A549 (cell line): ENCODE measurements at regions of chr1 and their contacts with region 1.

Region 1: DNA sequence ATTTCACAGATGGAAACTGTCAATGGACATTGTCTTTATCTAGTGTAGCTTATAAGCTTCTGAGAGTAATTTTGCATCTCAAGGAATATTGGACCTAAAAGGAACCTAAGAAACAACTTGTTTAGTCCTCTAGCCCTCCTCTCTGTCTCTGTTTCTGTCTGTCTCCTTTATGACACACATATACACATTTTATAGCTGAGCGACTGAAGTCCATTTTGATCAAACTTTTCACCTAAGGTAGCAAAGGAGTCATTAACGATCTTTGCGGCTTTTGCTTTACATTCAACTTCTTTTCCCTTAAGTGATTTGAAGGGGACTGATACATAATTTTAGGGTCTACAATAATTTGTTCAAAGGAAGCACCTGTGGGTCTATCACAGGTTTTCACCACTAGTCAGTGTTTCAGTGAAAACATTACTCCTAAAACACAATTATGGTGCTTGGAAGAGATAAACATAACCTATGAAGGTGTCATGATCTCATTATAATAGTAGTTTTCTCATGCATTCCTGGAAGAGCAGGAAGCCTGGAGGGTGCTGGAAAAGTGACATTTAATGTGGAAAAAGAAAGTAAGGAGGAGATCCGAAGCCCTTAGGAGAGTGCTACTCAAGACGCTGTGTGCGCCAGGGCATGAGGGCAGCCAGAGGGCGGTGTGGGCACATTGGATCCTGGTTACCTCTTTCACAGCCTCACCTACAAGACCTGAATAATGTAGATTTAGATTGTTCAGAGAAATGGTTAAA is 248.6 kb downstream of the DNM3 start:
- DNase-seq: peak; percentile 23 to 82
- ATAC-seq: peak; percentile 94 to 99
- H3K4me3 ChIP-seq: no peak overlapping the region
- H3K27ac ChIP-seq: peak overlapping the region in 1 of 2 experiments; percentile 34; a peak in 3 of 6 replicates
- H3K4me1 ChIP-seq: no peaks in the 10 kb centered on the region
- CTCF ChIP-seq: peak; percentile 79
- EP300 ChIP-seq: no peak
- POLR2A ChIP-seq: no peak
- RAD21 ChIP-seq: peak; percentile 93 to 95

Region 2: GRCh38 chr1:171877701-171878100 is 212.2 kb before region 1 on chr1:
- CTCF ChIA-PET with region 1: no interaction called
- POLR2A ChIA-PET with region 1: no interaction called
- DNase-seq: no peak
- ATAC-seq: no peak
- H3K4me3 ChIP-seq: no peak overlapping the region
- H3K27ac ChIP-seq: no peak overlapping the region
- H3K4me1 ChIP-seq: peaks cover 3% of the 10 kb centered on the region; the same call in 1 of the 3 replicates
- CTCF ChIP-seq: no peak
- EP300 ChIP-seq: no peak
- POLR2A ChIP-seq: no peak
- RAD21 ChIP-seq: no peak

Region 3: DNA sequence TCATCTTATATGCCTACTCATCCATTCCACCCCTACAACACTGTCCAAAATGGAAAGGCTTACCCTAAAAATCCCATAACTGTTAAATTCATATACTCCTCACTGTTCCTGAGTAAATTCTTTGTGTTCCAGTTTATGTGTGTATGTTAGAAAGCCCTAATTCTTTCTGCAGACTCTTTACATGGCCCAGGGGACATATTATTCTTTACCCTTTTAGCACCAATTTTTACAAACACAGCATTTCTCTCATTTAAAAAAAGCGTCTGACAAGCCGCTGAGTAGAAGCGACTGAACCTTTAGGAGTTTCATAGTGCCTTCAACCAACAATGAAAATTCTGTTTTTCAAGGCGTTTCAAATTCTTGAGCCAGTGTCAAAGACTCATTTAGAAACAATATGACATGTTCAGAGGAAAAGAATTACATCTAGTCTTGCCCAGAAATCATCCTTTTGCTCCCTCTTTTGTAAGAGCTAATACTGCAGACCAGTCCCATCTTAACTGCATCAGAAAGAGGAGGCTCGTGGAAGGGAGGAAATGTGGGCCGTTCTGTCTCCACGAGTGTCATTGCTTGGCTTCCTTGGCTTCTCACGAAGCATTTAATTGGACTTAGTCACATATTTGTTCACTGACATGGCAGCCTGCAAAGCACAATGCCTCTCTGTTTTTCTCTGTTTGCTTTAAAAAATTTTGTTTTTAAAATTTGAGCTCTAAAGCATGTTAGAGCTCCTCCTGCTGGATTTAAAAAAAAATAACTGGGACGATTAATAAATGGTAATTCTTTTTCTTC is 309.2 kb after region 1 on chr1:
- CTCF ChIA-PET with region 1: interaction called, 27 read pairs
- POLR2A ChIA-PET with region 1: no interaction called
- DNase-seq: peak; percentile 78 to 90
- ATAC-seq: peak; percentile 90 to 95
- H3K4me3 ChIP-seq: no peak overlapping the region; the same call in 2 of the 3 replicates
- H3K27ac ChIP-seq: peak overlapping the region; percentile 83 to 86
- H3K4me1 ChIP-seq: peaks cover 28% of the 10 kb centered on the region
- CTCF ChIP-seq: peak; percentile 92
- EP300 ChIP-seq: peak; percentile 13 to 14; a peak in 1 of 5 replicates
- POLR2A ChIP-seq: no peak
- RAD21 ChIP-seq: peak; percentile 93 to 99

Region 4: GRCh38 chr1:172405912-172406311 is 316.0 kb after region 1 on chr1:
- CTCF ChIA-PET with region 1: interaction called, 27 read pairs
- POLR2A ChIA-PET with region 1: no interaction called
- DNase-seq: no peak
- ATAC-seq: no peak
- H3K4me3 ChIP-seq: no peak overlapping the region
- H3K27ac ChIP-seq: no peak overlapping the region
- H3K4me1 ChIP-seq: no peaks in the 10 kb centered on the region
- CTCF ChIP-seq: no peak
- EP300 ChIP-seq: no peak
- POLR2A ChIP-seq: no peak
- RAD21 ChIP-seq: no peak